ENCODE measurements at regions of chr1 and their contacts with region 1.

Region 1: DNA sequence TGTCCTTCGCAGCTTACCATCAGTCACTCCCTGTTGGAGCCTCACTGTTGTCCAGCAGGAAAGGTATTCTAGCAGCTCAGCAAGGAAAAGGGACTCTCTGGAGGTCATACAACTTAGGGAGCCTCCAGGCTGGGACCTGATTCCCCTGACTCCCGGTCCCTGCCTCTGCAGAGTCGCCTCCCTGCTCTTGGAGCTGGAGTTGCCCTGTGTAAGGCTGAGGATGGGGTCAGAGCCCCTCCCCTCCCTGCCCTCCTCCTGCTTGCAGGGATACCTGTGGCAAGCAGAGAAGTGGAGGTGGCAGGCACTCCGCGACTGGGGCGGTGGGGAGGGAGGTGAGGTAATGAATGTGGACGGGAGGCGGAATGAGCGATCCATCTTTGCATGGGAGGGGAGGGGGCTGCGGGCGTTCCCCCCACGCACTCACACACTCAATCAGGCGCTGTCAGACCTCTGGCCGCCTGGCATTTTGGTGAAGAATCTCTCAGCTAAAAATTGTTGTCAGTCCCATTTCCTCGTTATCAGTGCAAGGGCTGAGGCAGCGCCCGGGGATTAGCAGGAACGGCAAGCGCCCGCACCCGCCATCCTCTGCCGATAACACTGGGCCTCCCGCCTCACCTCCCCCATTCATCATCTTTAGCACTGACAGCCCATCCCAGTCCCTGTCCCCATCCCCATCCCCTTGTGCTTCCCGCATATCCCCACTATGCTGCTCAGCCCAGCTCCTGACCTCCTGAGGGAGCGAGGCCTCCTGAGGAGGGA is 64.3 kb downstream of the TMEM53 start:
- DNase-seq: no peak
- ATAC-seq: no peak
- H3K4me3 ChIP-seq: no peak overlapping the region
- H3K4me1 ChIP-seq: no peaks in the 10 kb centered on the region
- CTCF ChIP-seq: no peak

Region 2: GRCh38 chr1:44652445-44653106 is 42.6 kb after region 1 on chr1:
- intact Hi-C with region 1: loop called in 1 of 2 experiments (anchors 2 kb)
- DNase-seq: peak; percentile 77 to 87 (median 87)
- ATAC-seq: peak; percentile 90
- H3K4me3 ChIP-seq: no peak overlapping the region
- H3K4me1 ChIP-seq: no peaks in the 10 kb centered on the region
- CTCF ChIP-seq: peak; percentile 91